GM10248 (cell line): ENCODE measurements at regions of chr4 and their contacts with region 1.

Region 1: DNA sequence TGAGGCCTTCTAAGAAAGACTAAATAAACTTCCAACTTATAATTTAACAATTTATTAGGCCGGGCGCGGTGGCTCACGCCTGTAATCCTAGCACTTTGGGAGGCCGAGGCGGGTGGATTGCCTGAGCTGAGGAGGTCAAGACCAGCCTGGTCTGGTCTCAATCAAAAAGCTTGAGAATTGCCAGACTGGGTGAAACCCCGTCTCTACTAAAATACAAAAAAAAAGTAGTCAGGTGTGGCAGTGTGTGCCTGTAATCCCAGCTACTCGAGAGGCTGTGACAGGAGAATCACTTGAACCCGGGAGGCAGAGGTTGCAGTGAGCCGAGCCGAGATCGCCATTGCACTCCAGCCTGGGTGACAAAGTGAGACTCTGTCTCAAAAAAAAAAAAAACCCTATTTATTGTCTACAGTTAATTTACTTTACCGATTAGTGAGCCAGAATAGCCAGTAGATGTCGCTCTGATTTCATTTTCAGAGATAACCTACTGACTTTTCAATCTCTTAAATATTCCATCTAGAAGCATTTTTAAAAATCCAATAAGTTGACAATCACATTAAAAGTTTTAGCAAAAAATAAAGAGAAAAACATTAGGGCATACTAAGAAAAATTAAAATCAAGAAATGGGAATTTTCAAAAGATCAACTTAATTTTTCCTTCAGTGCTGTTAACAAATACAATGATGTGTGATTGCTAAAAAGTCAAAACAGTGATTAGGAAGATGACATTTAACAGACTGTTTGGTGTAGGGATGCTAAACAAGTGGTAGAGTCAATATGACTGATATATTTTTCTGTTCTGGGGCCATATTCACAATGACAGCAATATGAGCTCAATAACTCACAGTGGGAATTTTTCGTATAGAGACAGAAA is 4.3 kb upstream of the SHROOM3 start:
- DNase-seq: peak; percentile 42
- CTCF ChIP-seq: peak; percentile 69

Region 2: DNA sequence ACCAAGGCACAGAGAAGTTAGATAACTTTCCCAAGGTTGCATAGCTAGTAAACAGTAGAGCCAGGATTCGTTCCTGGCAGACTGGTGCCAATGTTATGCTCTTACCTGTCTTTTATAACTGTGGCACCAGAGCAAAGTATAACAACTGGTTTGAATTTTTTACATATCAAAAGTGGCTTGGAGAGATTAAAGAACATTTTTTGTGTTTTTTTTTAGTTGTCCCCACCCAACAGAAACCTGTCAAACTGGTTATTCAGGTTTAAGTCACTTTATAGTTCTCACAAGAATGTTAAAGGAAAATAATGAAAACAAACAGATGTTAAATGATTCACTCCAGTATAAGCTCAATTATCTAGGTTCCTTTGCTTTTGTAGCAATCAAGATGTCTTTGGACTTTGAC is 194.8 kb before region 1 on chr4:
- CTCF ChIA-PET with region 1: no interaction called
- POLR2A ChIA-PET with region 1: no interaction called
- DNase-seq: no peak
- CTCF ChIP-seq: no peak

Region 3: DNA sequence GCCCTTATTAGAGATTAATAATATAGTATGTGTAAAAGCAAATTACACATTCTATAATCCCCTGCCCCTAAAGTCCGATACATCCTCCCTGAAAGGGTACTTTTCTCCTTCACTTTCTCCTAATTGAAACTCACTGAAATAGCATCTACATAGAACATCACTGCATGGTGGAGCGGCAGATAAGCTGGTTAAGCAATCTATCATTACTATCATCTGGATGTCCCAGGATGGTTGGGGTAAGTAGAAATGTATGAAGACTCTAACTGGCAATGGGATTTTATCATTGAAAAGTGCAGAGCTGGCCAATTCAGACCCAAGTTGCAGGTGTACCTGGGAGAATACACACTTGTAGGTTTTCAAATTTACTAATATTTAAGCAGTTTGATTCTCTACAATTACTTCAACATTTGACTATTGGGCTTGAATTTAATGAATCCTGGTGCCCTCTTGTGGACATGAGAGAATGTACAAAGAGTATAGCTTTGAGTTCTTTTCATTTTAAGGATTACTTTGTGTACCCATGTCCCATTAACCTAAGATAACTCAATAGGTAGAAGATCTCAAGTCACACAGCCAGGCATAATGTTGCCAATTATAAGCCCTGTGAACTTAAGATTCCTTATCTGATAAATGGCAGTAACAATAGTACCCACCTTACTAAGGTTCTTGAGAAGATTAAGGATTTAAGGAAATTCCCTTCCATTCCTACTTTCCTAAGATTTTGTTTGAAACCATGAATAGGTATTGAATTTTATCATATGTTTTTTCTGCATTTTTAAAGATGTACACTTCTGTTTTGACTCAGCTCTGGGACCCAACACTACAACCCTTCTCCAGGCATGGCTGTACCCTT is 74.1 kb after region 1 on chr4:
- CTCF ChIA-PET with region 1: interaction called, 153 read pairs
- POLR2A ChIA-PET with region 1: no interaction called
- DNase-seq: peak; percentile 50
- CTCF ChIP-seq: peak; percentile 59